Common myeloid progenitor, CD34-positive (primary cell): ENCODE measurements at regions of chr15 and their contacts with region 1.

Region 1: DNA sequence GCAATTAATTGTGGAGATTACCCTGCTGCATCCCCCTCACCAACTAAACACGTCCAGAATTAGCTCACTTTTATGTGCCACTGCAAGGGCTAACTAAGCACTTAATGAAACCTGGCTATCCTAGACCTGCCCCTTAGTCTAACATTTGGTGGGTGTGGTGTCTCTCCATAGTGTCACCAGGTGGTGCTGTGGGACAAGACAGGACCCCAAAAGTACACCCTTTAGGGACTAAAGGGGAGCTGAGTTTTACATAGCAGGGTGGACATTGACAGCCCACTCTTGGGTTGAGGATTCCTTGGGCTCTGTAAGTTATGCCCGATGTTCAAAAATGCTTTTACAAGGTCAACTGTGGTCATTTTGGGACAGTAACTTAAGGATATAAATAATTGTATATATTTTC is 5.7 kb downstream of the DUT start:
- DNase-seq: peak; percentile 51 to 68 (median 61)
- H3K4me3 ChIP-seq: no peak overlapping the region
- H3K27ac ChIP-seq: no peak overlapping the region
- H3K4me1 ChIP-seq: peaks cover 5 to 23% (median 14%) of the 10 kb centered on the region in 4 experiments
- H3K27me3 ChIP-seq: no peaks in the 10 kb centered on the region

Region 2: DNA sequence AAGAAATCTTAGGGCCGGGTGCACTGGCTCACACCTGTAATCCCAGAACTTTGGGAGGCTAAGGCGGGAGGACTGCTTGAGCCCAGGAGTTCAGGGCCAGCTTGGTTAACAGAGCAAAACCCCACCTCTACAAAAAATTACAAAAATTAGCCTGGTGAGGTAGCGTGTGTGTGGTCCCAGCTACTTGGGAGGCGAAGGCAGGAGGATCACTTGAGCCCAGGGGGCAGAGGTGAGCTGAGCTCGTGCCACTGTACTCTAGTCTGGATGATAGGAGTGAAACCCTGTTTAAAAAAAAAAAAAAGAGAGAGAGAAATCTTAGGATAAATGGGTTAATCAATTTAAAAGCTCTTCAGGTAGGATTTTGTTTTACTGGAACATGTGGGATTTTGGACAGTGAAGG is 36.9 kb before region 1 on chr15:
- CTCF ChIA-PET with region 1: no interaction called
- POLR2A ChIA-PET with region 1: no interaction called
- DNase-seq: no peak
- H3K4me3 ChIP-seq: no peak overlapping the region
- H3K27ac ChIP-seq: no peak overlapping the region
- H3K4me1 ChIP-seq: no peaks in the 10 kb centered on the region
- H3K27me3 ChIP-seq: no peaks in the 10 kb centered on the region

Region 3: GRCh38 chr15:48352474-48353072 is 15.6 kb after region 1 on chr15:
- CTCF ChIA-PET with region 1: interaction called, 34 read pairs
- POLR2A ChIA-PET with region 1: no interaction called
- DNase-seq: peak; percentile 73 to 82 (median 80)
- H3K4me3 ChIP-seq: peak overlapping the region in 1 of 7 experiments; percentile 38
- H3K27ac ChIP-seq: no peak overlapping the region
- H3K4me1 ChIP-seq: peaks cover 0 to 5% (median 0%) of the 10 kb centered on the region in 4 experiments
- H3K27me3 ChIP-seq: no peaks in the 10 kb centered on the region